Mammary epithelial cell (primary cell): ENCODE measurements at regions of chr10 and their contacts with region 1.

Region 1: GRCh38 chr10:59240582-59241183 is 64.2 kb downstream of the PHYHIPL start:
- DNase-seq: peak; percentile 16
- H3K4me3 ChIP-seq: no peak overlapping the region
- H3K27ac ChIP-seq: no peak overlapping the region
- H3K4me1 ChIP-seq: no peaks in the 10 kb centered on the region
- H3K27me3 ChIP-seq: peaks cover 2% of the 10 kb centered on the region
- CTCF ChIP-seq: peak; percentile 39 to 56

Region 2: GRCh38 chr10:58712982-58713381 is 527.7 kb before region 1 on chr10:
- CTCF ChIA-PET with region 1: no interaction called
- dilution Hi-C with region 1: no loop called
- in situ Hi-C with region 1: no loop called
- intact Hi-C with region 1: no loop called
- DNase-seq: no peak
- H3K4me3 ChIP-seq: no peak overlapping the region
- H3K27ac ChIP-seq: no peak overlapping the region
- H3K4me1 ChIP-seq: no peaks in the 10 kb centered on the region
- H3K27me3 ChIP-seq: no peaks in the 10 kb centered on the region
- CTCF ChIP-seq: peak in 1 of 2 donors; percentile 27

Region 3: GRCh38 chr10:59465088-59465487 is 224.4 kb after region 1 on chr10:
- CTCF ChIA-PET with region 1: no interaction called
- dilution Hi-C with region 1: no loop called
- in situ Hi-C with region 1: loop called in 1 of 2 experiments (anchors 10 kb)
- intact Hi-C with region 1: loop called (anchors 1 kb)
- DNase-seq: peak; percentile 27
- H3K4me3 ChIP-seq: no peak overlapping the region
- H3K27ac ChIP-seq: no peak overlapping the region
- H3K4me1 ChIP-seq: no peaks in the 10 kb centered on the region
- H3K27me3 ChIP-seq: no peaks in the 10 kb centered on the region
- CTCF ChIP-seq: peak; percentile 18 to 62

Region 4: GRCh38 chr10:59580026-59580863 is 339.6 kb after region 1 on chr10:
- CTCF ChIA-PET with region 1: interaction called, 4 read pairs
- dilution Hi-C with region 1: no loop called
- in situ Hi-C with region 1: loop called in 1 of 2 experiments (anchors 10 kb)
- intact Hi-C with region 1: loop called (anchors 1 kb)
- DNase-seq: no peak
- H3K4me3 ChIP-seq: no peak overlapping the region
- H3K27ac ChIP-seq: no peak overlapping the region
- H3K4me1 ChIP-seq: peaks cover 4% of the 10 kb centered on the region
- H3K27me3 ChIP-seq: no peaks in the 10 kb centered on the region
- CTCF ChIP-seq: peak; percentile 43 to 62

Region 5: DNA sequence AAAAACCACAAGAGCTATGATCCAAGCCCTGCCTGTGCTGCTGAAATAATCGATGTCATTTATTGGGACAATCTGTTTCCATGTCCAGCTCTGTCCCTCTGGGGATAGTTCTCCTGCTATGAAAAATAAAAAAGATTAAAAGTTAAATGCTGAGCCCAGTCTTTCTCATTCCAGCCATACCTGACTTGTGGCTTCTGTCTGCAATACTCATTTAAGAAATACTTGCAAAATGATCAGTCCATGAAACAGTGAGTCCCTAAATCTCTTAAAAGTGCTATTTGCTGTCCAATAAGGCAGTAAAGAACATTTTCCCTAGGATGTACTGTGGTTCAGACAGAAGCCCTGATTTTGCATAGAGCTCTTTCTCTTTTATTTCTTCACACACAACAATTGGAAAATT is 377.3 kb after region 1 on chr10:
- CTCF ChIA-PET with region 1: interaction called, 3 read pairs
- dilution Hi-C with region 1: loop called (anchors 25 kb)
- in situ Hi-C with region 1: loop called in 1 of 2 experiments (anchors 5 kb)
- intact Hi-C with region 1: loop called (anchors 1 kb)
- DNase-seq: no peak
- H3K4me3 ChIP-seq: no peak overlapping the region
- H3K27ac ChIP-seq: no peak overlapping the region
- H3K4me1 ChIP-seq: no peaks in the 10 kb centered on the region
- H3K27me3 ChIP-seq: no peaks in the 10 kb centered on the region
- CTCF ChIP-seq: no peak

Region 6: DNA sequence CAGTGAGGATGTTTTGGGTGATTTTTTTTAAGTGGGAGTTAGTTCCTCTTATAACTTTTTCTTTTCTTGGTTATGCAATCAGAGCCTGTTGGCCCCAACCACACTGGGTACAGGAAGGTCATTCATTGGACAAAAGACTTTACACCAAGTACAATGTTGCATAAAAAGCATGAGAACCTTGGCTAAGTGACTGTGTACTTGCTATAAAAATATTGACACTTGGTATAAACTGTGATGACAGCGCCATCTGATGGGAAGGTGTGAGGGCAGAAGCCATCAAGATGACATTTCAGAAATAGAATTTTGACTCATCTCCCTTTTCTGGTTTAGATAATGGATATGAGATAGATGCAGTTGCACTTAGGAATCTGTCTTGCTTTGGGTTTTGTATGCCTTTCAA is 792.0 kb after region 1 on chr10:
- CTCF ChIA-PET with region 1: no interaction called
- dilution Hi-C with region 1: no loop called
- in situ Hi-C with region 1: loop called in 1 of 2 experiments (anchors 25 kb)
- intact Hi-C with region 1: no loop called
- DNase-seq: peak; percentile 59
- H3K4me3 ChIP-seq: no peak overlapping the region
- H3K27ac ChIP-seq: no peak overlapping the region
- H3K4me1 ChIP-seq: no peaks in the 10 kb centered on the region
- H3K27me3 ChIP-seq: no peaks in the 10 kb centered on the region
- CTCF ChIP-seq: peak; percentile 69 to 71